Transverse colon (tissue), 4 donors: ENCODE measurements at regions of chr1 and their contacts with region 1.

Region 1: DNA sequence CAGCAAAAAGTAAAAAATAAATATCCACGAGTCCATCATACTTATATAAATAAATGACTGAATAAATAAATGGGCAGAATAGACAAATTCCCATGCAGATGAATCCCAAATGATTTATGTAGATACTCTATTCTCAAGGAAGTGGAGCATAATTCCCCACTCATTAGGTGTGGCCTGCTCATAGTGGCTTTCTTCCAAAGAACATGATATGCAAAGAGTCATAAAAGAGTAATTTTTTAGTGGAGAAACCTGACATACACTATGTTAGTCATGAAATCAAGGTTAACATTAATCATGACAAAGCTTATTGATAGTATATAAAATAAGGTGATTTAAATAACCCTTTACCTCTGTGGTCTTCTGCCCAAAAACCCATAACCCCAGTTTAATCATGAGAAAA is 298.9 kb downstream of the DPYD start:
- DNase-seq: no peak
- H3K4me3 ChIP-seq: no peak overlapping the region
- H3K27ac ChIP-seq: no peak overlapping the region
- H3K4me1 ChIP-seq: peaks cover 0 to 16% (median 4%) of the 10 kb centered on the region in 4 donors
- H3K27me3 ChIP-seq: no peaks in the 10 kb centered on the region
- CTCF ChIP-seq: no peak
- EP300 ChIP-seq: no peak
- POLR2A ChIP-seq: no peak

Region 2: DNA sequence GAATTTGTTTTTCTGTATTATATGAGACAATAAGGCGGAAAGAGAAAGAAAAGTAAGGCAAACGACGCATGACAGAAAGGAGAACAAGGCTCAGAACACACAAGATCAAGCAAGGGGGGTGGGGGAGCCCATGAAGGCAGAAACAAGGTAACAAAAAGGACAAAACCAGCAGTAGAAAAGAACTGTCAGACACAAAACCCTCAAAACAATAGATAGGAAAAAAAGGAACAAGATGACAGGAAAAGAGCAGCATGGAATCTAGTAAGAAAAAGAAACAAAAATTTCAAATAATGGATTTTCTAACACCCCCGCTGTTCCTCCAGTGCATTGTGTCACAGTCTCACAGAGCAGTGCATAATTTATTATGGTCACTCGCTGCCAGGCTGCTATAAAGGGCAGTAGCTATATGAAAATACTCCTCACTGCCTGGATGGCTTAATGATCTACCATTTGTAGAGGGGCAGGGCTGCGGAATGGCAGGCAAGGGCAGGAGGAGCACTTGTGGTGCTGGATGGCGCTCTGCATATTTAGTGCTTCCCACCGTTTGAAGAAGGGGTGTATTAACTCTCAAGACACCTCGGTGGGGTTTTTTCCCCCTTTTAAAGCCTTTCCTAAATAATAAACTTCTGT is 269.0 kb before region 1 on chr1:
- in situ Hi-C with region 1: no loop called
- intact Hi-C with region 1: no loop called
- DNase-seq: peak; percentile 16
- H3K4me3 ChIP-seq: no peak overlapping the region
- H3K27ac ChIP-seq: no peak overlapping the region
- H3K4me1 ChIP-seq: peaks cover 0 to 21% (median 4%) of the 10 kb centered on the region in 4 donors
- H3K27me3 ChIP-seq: no peaks in the 10 kb centered on the region
- CTCF ChIP-seq: no peak
- EP300 ChIP-seq: no peak
- POLR2A ChIP-seq: no peak

Region 3: GRCh38 chr1:97603776-97604175 is 18.2 kb before region 1 on chr1:
- in situ Hi-C with region 1: no loop called
- intact Hi-C with region 1: loop called (anchors 1 kb)
- DNase-seq: no peak
- H3K4me3 ChIP-seq: no peak overlapping the region
- H3K27ac ChIP-seq: no peak overlapping the region
- H3K4me1 ChIP-seq: no peaks in the 10 kb centered on the region
- H3K27me3 ChIP-seq: no peaks in the 10 kb centered on the region
- CTCF ChIP-seq: no peak
- EP300 ChIP-seq: no peak
- POLR2A ChIP-seq: no peak